ENCODE measurements at regions of chr9 and their contacts with region 1.

Region 1: GRCh38 chr9:104863180-104863883 is 64.6 kb downstream of the ABCA1 start:
- DNase-seq: peak; percentile 62 to 69
- H3K4me3 ChIP-seq: no peak overlapping the region
- H3K4me3 Mint-ChIP-seq: no peak overlapping the region
- H3K27ac Mint-ChIP-seq: no peak overlapping the region
- H3K4me1 ChIP-seq: 0 out of 2 replicates have a peak, but pooled peaks cover 11% of the 10 kb centered on the region
- H3K4me1 Mint-ChIP-seq: peaks cover 19% of the 10 kb centered on the region
- H3K27me3 ChIP-seq: no peaks in the 10 kb centered on the region
- H3K27me3 Mint-ChIP-seq: no peaks in the 10 kb centered on the region
- CTCF ChIP-seq: peak; percentile 68 to 85

Region 2: GRCh38 chr9:104780799-104781395 is 82.4 kb before region 1 on chr9:
- CTCF ChIA-PET with region 1: no interaction called
- POLR2A ChIA-PET with region 1: no interaction called
- intact Hi-C with region 1: loop called (anchors 1 kb)
- DNase-seq: peak in 1 of 2 experiments; percentile 17
- H3K4me3 ChIP-seq: no peak overlapping the region
- H3K4me3 Mint-ChIP-seq: no peak overlapping the region
- H3K27ac Mint-ChIP-seq: no peak overlapping the region
- H3K4me1 ChIP-seq: no peaks in the 10 kb centered on the region
- H3K4me1 Mint-ChIP-seq: no peaks in the 10 kb centered on the region
- H3K27me3 ChIP-seq: no peaks in the 10 kb centered on the region
- H3K27me3 Mint-ChIP-seq: no peaks in the 10 kb centered on the region
- CTCF ChIP-seq: peak; percentile 21 to 29

Region 3: DNA sequence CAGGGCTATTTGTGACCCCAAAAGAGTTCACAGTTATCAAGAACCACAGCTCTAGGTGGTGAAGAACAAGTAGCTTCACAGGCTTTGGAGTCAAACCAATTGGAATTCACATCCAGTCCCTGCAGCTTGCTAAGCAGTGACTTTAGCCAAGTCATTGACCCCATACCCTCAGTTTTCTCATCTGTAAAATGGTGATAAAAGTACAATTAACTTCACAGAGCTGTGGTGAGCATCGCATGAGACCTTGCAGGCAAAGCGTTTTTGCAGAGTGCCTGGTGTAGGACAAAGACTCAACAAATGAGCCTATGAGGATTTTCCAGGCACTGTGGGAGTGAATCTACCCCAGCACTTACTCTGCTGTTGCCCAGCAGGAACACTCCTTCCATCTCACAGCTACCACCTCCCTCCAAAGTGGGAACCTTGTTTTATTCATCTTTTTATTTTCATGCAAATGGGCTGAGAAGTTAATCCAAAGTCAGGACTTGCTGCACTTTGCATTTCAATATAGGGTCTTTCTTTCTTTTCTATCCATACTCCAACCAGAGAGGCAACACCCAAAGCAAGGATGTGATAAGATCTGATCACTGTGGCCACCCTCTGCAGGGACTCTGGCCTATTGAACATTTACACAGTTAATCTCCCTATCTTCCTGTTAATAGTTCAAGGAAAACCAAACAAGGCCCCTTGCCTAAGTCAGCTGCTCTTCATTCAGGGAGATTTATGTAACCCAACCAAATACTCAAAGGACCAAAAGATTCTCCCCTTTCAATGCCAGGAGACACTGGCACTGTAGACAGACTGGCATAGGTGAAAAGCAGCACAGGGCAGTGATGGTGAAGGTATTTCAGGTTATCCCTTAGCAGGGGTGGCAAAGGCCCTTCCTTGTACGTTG is 22.7 kb after region 1 on chr9:
- CTCF ChIA-PET with region 1: interaction called, 8 read pairs
- POLR2A ChIA-PET with region 1: no interaction called
- intact Hi-C with region 1: loop called (anchors 1 kb)
- DNase-seq: peak; percentile 66 to 67
- H3K4me3 ChIP-seq: no peak overlapping the region
- H3K4me3 Mint-ChIP-seq: peak overlapping the region; percentile 56
- H3K27ac Mint-ChIP-seq: peak overlapping the region; percentile 58
- H3K4me1 ChIP-seq: peaks cover 48% of the 10 kb centered on the region
- H3K4me1 Mint-ChIP-seq: peaks cover 31% of the 10 kb centered on the region
- H3K27me3 ChIP-seq: no peaks in the 10 kb centered on the region
- H3K27me3 Mint-ChIP-seq: no peaks in the 10 kb centered on the region
- CTCF ChIP-seq: no peak

Region 4: DNA sequence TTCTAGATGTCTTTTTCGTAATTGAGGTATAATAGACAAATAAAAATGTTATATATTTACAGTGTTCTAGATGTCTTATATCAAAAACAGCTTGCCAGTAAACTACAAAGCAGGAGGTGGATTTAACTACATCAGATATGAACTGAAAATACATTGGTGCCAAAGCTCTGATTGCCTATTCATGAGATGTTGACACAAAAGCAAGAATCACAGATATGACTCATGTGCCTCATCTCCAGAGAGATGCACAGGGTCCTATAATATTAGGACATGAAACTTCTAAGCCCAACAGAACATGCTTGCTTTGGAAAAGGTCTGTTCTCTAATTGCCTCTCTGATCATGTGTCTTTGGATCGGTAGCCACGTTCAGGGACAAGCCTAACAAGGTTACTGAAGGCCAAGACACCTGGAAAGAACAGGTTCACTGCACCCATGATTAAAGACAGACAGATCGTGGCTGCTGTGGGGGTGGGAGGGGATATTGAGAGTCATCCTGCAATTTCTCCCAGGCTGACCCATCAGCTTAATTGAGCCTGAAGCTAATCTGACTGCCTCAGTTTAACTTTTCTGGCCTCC is 47.8 kb after region 1 on chr9:
- CTCF ChIA-PET with region 1: no interaction called
- POLR2A ChIA-PET with region 1: no interaction called
- intact Hi-C with region 1: loop called (anchors 5 kb)
- DNase-seq: no peak
- H3K4me3 ChIP-seq: no peak overlapping the region
- H3K4me3 Mint-ChIP-seq: no peak overlapping the region
- H3K27ac Mint-ChIP-seq: no peak overlapping the region
- H3K4me1 ChIP-seq: peaks cover 40% of the 10 kb centered on the region
- H3K4me1 Mint-ChIP-seq: peaks cover 43% of the 10 kb centered on the region
- H3K27me3 ChIP-seq: no peaks in the 10 kb centered on the region
- H3K27me3 Mint-ChIP-seq: no peaks in the 10 kb centered on the region
- CTCF ChIP-seq: no peak

Measured in Caco-2 (cell line).